ENCODE measurements at regions of chr2 and their contacts with region 1.

Region 1: GRCh38 chr2:27123302-27124231 is at the start of gene ABHD1:
- DNase-seq: no peak
- H3K4me3 ChIP-seq: peak within 1 kb of the TSS; percentile 47
- H3K27ac ChIP-seq: no peak within 1 kb of the TSS
- H3K4me1 ChIP-seq: peaks cover 23% of the 10 kb centered on the region
- H3K27me3 ChIP-seq: peaks cover 11% of the 10 kb centered on the region
- CTCF ChIP-seq: 0 out of 2 replicates have a peak, but pooled peaks have one; percentile 13
- total RNA-seq, gene ABHD1: 0.22 TPM in 1 of 2 replicates, not detected in the other

Region 2: GRCh38 chr2:27152786-27153510 is 29.4 kb after region 1 on chr2:
- CTCF ChIA-PET with region 1: interaction called, 4 read pairs
- POLR2A ChIA-PET with region 1: no interaction called
- intact Hi-C with region 1: loop called (anchors 2 kb)
- DNase-seq: no peak
- H3K4me3 ChIP-seq: no peak overlapping the region
- H3K27ac ChIP-seq: no peak overlapping the region
- H3K4me1 ChIP-seq: no peaks in the 10 kb centered on the region
- H3K27me3 ChIP-seq: no peaks in the 10 kb centered on the region
- CTCF ChIP-seq: no peak

Region 3: GRCh38 chr2:27335311-27335710 is 211.7 kb after region 1 on chr2:
- CTCF ChIA-PET with region 1: no interaction called
- POLR2A ChIA-PET with region 1: no interaction called
- intact Hi-C with region 1: no loop called
- DNase-seq: no peak
- H3K4me3 ChIP-seq: no peak overlapping the region
- H3K27ac ChIP-seq: no peak overlapping the region
- H3K4me1 ChIP-seq: no peaks in the 10 kb centered on the region
- H3K27me3 ChIP-seq: no peaks in the 10 kb centered on the region
- CTCF ChIP-seq: no peak

Region 4: DNA sequence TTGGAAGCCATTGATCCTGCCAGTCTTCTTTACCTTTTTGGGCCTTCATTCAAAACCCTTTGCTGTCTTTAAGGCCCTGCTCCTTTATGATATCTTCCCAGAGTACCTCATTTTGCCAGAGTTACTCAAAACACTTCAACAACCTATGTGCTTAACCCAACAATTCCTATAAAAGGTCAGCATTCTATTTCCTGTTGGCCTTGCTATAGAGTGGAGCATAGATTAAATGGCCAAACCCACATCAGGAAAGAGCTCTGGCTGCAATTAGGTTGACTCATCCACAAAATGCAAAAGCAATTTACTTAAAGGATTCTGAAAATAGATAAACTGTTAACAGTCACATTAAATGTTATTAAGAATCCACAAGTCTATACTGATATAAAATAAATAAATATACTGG is 669.2 kb after region 1 on chr2:
- CTCF ChIA-PET with region 1: no interaction called
- POLR2A ChIA-PET with region 1: interaction called, 12 read pairs
- intact Hi-C with region 1: no loop called
- DNase-seq: peak; percentile 24
- H3K4me3 ChIP-seq: no peak overlapping the region
- H3K27ac ChIP-seq: no peak overlapping the region
- H3K4me1 ChIP-seq: no peaks in the 10 kb centered on the region
- H3K27me3 ChIP-seq: no peaks in the 10 kb centered on the region
- CTCF ChIP-seq: no peak